GM10248 (cell line): ENCODE measurements at regions of chr3 and their contacts with region 1.

Region 1: GRCh38 chr3:138051946-138052802 is 42.2 kb downstream of the CLDN18 start:
- DNase-seq: peak; percentile 42
- CTCF ChIP-seq: peak; percentile 88

Region 2: GRCh38 chr3:137110484-137110883 is 941.7 kb before region 1 on chr3:
- CTCF ChIA-PET with region 1: interaction called, 29 read pairs
- POLR2A ChIA-PET with region 1: no interaction called
- DNase-seq: peak; percentile 46
- CTCF ChIP-seq: peak; percentile 49

Region 3: GRCh38 chr3:137946345-137946973 is 105.7 kb before region 1 on chr3:
- CTCF ChIA-PET with region 1: interaction called, 17 read pairs
- POLR2A ChIA-PET with region 1: no interaction called
- DNase-seq: peak; percentile 53
- CTCF ChIP-seq: peak; percentile 62

Region 4: DNA sequence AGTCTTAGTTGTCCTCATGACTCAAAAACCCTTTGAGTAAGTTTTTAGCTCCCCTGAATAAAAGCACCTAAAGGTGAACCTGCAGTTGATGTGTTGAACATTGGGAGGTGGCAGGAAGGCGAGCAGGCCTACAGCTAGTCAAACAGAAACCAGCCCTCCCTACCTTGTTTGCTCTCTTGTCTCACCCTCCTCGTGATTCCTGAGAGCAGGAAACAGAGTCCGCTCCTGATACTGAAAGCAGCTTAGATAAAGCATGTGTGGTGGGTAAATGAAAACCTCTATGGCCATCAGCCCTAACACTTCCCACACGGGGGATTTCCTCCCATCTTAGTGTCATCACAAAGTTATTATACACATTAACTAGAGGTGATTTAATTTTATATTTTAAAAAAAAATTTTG is 64.0 kb before region 1 on chr3:
- CTCF ChIA-PET with region 1: interaction called, 10 read pairs
- POLR2A ChIA-PET with region 1: no interaction called
- DNase-seq: peak; percentile 52
- CTCF ChIP-seq: no peak